ENCODE measurements at regions of chr15 and their contacts with region 1.

Region 1: GRCh38 chr15:37100109-37100965 is at the start of gene MEIS2:
- DNase-seq: peak; percentile 92 to 93
- ATAC-seq: peak; percentile 67 to 84 (median 73)
- H3K4me3 ChIP-seq: peak within 1 kb of the TSS; percentile 55 to 86 (median 75)
- H3K27ac ChIP-seq: peak within 1 kb of the TSS; percentile 91 to 99 (median 96)
- H3K4me1 ChIP-seq: peaks cover 0 to 23% (median 10%) of the 10 kb centered on the region in 9 donors
- H3K27me3 ChIP-seq: peaks cover 0 to 99% (median 20%) of the 10 kb centered on the region in 7 donors
- CTCF ChIP-seq: no peak
- total RNA-seq, gene MEIS2: 34.0 to 64.5 (median 48.5) TPM

Region 2: DNA sequence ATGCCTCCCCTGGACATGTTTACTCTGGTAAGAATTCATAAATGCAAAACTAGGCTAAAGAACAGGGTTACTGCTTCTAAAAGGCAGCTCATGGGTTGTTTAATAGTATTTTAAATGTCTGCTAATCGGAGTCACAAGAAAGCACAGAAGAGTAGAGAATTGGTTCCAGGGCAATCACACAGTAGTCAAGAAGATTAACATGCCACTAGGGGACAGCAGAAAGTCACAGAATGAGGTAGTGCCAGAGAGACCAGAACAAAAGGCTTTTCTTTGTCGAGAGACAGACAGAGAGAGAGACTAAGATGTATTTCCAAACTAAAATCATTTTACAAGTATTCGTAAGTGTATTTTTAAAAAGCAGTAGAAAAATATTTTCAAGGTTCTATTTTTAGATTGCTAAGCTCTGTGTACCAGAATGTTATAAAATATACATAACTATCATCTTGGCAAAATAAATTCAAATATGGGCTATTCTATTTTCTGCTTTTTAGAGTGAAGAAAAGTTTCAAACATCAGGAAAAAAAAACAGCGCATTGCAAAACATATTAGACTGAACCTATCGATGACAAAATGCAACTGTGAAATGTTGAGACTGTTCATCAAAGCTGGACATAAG is 599.2 kb before region 1 on chr15:
- intact Hi-C with region 1: loop called in 1 of 10 experiments (anchors 10 kb)
- DNase-seq: peak in 1 of 2 donors; percentile 60
- ATAC-seq: peak; percentile 85 to 96 (median 92)
- H3K4me3 ChIP-seq: peak overlapping the region in 1 of 10 donors; percentile 3
- H3K27ac ChIP-seq: peak overlapping the region in 3 of 10 donors; percentile 0 to 21 (median 4)
- H3K4me1 ChIP-seq: peaks cover 0 to 41% (median 6%) of the 10 kb centered on the region in 9 donors
- H3K27me3 ChIP-seq: no peaks in the 10 kb centered on the region
- CTCF ChIP-seq: peak; percentile 44 to 89 (median 71)

Region 3: DNA sequence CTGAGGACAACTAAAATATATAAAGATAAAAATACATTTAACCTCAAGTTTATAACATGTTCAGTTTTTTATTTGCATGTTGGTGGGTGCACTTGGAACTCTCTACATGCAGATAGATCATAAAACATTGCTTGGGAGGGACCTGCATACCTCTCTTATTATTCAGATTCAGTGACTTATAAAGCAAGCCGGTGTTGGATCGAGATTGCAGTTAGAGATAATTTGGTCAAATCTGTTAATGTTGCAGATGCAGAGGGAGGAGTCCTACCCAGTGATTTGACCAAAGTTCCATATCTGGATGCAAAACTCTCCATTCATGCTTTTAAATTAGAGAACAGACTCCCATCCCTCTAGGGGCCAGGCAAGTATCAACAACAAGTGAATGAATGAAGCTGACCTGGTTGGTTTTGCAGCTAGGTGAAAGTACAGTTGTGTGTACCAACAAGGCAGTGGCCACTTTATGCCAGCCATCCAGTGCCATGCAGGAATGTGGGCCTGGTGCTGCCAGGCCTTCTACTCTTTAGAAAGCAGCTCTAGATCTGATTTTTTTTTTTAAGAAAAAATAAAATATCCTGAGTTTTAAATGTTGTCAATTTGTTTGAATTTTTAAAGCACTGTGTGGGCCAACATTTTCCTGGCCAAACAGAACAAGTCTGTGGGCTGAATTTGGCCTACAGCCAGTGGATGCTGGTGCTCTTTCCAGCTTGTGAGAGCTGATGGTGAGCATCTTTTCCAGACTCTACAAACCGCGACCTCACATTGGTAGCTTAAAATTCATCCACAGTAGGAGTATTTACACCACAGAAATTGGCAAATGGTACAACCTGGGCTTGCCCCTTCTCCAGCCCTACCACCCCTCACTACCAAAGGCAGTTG is 508.6 kb before region 1 on chr15:
- intact Hi-C with region 1: loop called in 2 of 10 experiments (anchors 10 kb)
- DNase-seq: no peak
- ATAC-seq: peak in 4 of 8 donors; percentile 14 to 39 (median 24)
- H3K4me3 ChIP-seq: no peak overlapping the region
- H3K27ac ChIP-seq: peak overlapping the region in 7 of 10 donors; percentile 20 to 90 (median 67)
- H3K4me1 ChIP-seq: peaks cover 0 to 20% (median 8%) of the 10 kb centered on the region in 9 donors
- H3K27me3 ChIP-seq: no peaks in the 10 kb centered on the region
- CTCF ChIP-seq: no peak

Region 4: DNA sequence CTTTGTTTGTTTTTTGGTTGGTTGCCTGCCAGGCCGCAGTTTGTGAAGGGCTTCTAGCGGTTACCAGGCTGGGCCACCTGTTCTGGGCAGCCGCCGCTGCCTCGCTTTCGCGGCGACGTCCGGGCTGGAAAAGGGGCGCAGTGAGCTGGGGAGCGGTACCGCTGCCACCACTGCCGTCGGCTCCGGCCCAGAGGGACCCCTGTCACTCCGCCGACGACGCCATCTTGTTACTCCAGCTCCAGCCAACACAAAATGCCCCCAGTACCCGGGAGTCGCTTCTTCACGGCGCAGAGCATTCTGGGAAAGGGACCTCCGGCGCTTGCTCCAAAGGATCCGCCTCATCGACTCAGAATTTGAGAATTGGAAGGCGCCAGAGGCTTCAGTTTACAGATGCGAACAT is 282.1 kb before region 1 on chr15:
- intact Hi-C with region 1: no loop called
- DNase-seq: peak in 1 of 2 donors; percentile 5
- ATAC-seq: peak in 1 of 8 donors; percentile 50
- H3K4me3 ChIP-seq: no peak overlapping the region
- H3K27ac ChIP-seq: no peak overlapping the region
- H3K4me1 ChIP-seq: peaks cover 0 to 14% (median 12%) of the 10 kb centered on the region in 9 donors
- H3K27me3 ChIP-seq: no peaks in the 10 kb centered on the region
- CTCF ChIP-seq: no peak

Region 5: DNA sequence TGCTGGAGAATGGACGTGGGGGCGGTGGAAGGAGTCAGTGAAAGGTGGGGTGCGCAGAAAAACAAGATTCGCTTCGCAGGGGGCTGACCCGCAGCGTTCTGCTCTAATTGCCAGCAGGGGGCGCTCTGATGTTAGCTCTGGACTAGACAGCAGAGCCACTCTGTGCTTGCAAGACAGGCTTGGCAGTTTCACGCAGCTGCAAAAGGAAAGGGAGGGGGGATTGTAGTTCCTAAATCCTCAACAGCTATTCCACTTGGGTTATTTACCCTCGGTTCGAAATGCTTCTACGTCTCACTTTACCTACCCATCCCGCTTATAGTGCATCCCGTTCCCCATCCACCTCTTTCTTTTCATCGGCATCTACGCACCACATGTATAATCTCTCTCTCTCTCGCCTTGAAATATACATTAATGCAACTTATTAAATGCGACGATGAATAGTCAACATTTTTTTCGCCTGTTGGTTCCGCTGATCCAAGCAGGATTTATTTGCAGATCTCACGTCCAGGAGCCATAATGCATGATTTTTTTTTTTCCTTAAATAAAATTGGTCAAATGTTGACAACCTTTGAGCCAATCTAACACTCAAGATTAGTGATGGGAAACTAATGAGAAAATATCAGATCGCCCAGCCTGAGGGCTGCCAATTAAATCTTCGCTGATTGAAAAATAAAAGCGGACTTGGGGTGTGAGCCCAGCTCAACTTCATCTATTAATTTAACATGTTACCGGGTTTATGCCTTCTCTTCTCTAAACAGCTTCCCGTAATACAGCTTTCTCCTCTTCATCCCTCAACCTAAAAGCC is 216.4 kb before region 1 on chr15:
- intact Hi-C with region 1: loop called in 9 of 10 experiments (anchors 2 to 10 kb)
- DNase-seq: peak; percentile 87 to 88
- ATAC-seq: peak; percentile 85 to 96 (median 91)
- H3K4me3 ChIP-seq: peak overlapping the region in 9 of 10 donors; percentile 21 to 53 (median 40)
- H3K27ac ChIP-seq: no peak overlapping the region
- H3K4me1 ChIP-seq: peaks cover 0 to 29% (median 4%) of the 10 kb centered on the region in 9 donors
- H3K27me3 ChIP-seq: peaks cover 0 to 100% (median 66%) of the 10 kb centered on the region in 7 donors
- CTCF ChIP-seq: peak; percentile 76 to 88 (median 84)

Region 6: GRCh38 chr15:37045859-37046740 is 54.2 kb before region 1 on chr15:
- intact Hi-C with region 1: loop called in 1 of 10 experiments (anchors 5 kb)
- DNase-seq: no peak
- ATAC-seq: peak in 6 of 8 donors; percentile 32 to 68 (median 57)
- H3K4me3 ChIP-seq: no peak overlapping the region
- H3K27ac ChIP-seq: peak overlapping the region in 5 of 10 donors; percentile 3 to 54 (median 24)
- H3K4me1 ChIP-seq: peaks cover 0 to 40% (median 29%) of the 10 kb centered on the region in 9 donors
- H3K27me3 ChIP-seq: no peaks in the 10 kb centered on the region
- CTCF ChIP-seq: no peak

Measured in heart right ventricle (tissue), 16 donors.